AG04449 (cell line): ENCODE measurements at regions of chr17 and their contacts with region 1.

Region 1: DNA sequence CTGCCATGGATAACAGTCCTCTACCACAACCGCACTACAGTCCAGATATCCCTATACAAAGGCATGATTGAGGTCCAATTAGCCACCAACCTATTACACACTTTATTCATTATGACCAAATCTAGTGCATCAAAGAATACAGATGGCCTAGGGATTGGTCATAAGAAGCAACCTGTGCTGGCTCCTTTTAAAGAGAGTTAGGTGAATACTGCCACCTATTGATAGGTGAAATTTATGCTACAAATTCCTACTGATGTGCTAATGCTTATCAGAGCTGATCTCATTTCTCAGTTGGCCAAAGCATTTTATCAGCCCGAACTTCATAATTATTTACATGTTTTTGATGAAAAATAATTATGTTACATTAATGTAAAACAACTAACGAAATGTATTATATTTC is 166.2 kb downstream of the ANKFN1 start:
- DNase-seq: no peak
- H3K4me3 ChIP-seq: no peak overlapping the region
- CTCF ChIP-seq: peak; percentile 19

Region 2: DNA sequence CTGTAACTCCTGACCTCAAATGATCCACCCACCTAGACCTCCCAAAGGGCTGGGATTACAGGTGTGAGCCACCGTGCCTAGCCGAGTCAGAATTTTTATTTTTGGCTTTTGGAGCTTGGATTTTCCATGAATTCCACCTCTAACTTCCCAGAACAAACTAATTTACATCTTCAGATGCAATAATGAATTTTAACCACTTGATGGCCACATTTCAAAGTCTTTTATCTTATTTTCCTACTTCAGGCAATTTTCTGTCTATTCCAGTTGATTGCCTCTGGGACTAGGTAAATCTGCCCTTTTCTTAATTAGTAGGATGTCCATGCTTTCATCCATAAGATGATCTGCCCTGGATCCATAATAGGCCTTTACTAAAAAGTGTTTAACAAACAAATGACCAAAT is 322.7 kb before region 1 on chr17:
- CTCF ChIA-PET with region 1: interaction called, 18 read pairs
- POLR2A ChIA-PET with region 1: no interaction called
- DNase-seq: no peak
- H3K4me3 ChIP-seq: no peak overlapping the region
- CTCF ChIP-seq: no peak

Region 3: DNA sequence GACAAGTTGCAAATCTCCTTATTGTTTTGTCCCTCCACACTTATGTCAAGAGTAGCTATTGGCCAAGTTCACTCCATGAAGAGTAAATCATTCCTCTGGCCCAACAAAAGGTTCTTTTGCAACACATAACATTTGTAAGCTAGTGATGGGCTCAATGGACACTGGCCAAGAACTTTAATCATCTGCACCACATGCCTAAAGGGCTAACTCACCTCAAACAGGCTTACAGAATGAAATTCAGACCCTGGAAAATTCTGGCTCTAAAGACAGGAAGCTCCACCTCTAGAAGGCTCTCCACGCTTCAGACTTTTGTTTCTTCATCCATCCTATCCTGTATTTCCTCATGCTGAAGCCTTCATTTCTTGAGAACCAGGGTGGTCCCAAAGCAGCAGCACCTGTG is 177.2 kb before region 1 on chr17:
- CTCF ChIA-PET with region 1: interaction called, 11 read pairs
- POLR2A ChIA-PET with region 1: no interaction called
- DNase-seq: peak; percentile 77
- H3K4me3 ChIP-seq: no peak overlapping the region
- CTCF ChIP-seq: no peak

Region 4: GRCh38 chr17:56203430-56203829 is 116.1 kb before region 1 on chr17:
- CTCF ChIA-PET with region 1: no interaction called
- POLR2A ChIA-PET with region 1: no interaction called
- DNase-seq: no peak
- H3K4me3 ChIP-seq: no peak overlapping the region
- CTCF ChIP-seq: no peak